Activated CD4-positive, alpha-beta T cell treated with anti-CD3 and anti-CD28 coated beads, Interleukin-2, amount 10 ng/mL, durations not matched to agents 7 days and 5 days (primary cell): ENCODE measurements at regions of chr5 and their contacts with region 1.

Region 1: DNA sequence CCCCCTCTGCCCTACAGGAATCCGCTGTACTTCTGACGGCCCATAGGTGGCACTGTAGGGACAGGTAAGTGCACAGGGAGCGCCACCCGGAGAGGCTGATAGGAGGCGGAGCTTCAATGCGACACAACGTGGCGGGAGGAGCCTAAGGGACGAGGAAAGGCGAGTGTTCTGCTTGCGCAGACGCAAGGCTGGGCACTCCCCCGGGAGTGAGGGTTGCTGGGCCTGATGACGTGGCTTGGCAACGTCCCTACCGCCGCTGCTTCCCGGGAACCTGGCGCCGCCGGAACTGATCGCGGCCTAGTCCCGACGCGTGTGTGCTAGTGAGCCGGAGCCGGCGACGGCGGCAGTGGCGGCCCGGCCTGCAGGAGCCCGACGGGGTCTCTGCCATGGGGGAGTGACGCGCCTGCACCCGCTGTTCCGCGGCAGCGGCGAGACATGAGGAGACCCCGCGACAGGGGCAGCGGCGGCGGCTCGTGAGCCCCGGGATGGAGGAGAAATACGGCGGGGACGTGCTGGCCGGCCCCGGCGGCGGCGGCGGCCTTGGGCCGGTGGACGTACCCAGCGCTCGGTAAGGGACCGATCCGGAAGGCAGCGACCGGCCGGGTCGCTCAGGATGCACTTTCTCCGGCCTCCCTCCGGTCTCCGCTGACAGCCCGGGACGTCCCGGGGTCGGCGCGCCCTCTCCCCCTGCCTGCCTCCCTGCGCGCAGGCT is at the start of gene SLC30A5:
- DNase-seq: peak; percentile 99
- H3K4me3 Mint-ChIP-seq: peak within 1 kb of the TSS; percentile 96
- H3K27ac Mint-ChIP-seq: peak within 1 kb of the TSS; percentile 97
- H3K4me1 Mint-ChIP-seq: peaks cover 35% of the 10 kb centered on the region
- H3K27me3 Mint-ChIP-seq: no peaks in the 10 kb centered on the region
- total RNA-seq, gene SLC30A5: 40.2 to 50.5 TPM

Region 2: DNA sequence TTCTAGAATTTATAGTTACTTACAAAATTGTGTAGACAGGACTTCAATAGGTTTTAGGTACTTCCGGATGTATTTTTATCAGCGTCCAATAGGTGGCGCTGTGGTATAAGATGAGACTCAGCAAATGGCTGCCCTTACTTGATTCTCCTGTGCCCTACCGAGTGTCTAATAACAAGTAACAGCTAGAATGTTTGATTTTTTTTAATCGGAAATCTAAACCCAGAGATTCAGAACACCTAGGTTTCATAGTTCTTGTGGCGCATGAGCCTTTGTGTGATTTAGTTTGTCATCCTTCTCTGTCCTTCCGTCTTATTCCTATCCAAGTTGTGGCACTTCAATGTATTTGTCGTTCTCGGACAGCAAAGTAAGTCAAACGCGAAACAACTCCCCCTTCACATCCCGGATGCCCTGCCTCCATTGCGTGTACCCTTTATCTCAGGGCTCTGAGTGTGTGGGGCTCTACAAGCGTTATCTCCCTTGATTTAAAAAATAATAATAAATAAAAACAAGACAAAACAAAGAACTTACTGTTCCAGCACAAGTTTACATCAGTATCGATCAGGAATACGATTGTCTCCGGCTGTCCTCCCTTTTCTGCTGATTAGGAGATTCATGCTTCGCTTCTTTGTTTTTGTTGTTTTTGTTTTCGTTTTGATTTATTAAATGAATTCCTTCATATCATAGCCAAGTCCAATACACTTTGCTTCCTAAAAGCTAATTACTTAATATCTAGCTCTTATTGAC is 50.8 kb before region 1 on chr5:
- CTCF ChIA-PET with region 1: interaction called, 10 read pairs
- POLR2A ChIA-PET with region 1: no interaction called
- DNase-seq: peak; percentile 91
- H3K4me3 Mint-ChIP-seq: peak overlapping the region; percentile 75
- H3K27ac Mint-ChIP-seq: peak overlapping the region; percentile 84
- H3K4me1 Mint-ChIP-seq: peaks cover 24% of the 10 kb centered on the region
- H3K27me3 Mint-ChIP-seq: no peaks in the 10 kb centered on the region

Region 3: DNA sequence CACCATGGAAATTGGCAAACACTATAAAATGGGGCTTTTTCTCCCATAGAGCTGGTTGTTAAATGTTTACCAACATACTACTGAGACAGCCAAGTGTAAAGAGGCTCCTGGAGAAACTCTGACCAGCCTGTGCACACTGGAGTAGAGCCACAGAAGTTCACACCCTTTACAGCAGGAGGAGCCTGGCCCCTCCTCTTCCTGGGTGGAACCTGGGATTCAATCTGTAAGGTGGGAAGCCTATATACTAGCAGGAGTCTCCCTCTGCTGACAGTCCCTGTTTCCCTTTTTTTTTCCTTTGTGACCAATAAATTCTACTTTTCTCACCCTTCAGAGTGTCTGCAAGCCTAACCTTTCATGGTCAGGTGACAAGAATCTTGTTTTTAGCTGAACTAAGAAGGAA is 10.5 kb before region 1 on chr5:
- CTCF ChIA-PET with region 1: interaction called, 24 read pairs
- POLR2A ChIA-PET with region 1: interaction called, 3 read pairs
- DNase-seq: no peak
- H3K4me3 Mint-ChIP-seq: no peak overlapping the region
- H3K27ac Mint-ChIP-seq: no peak overlapping the region
- H3K4me1 Mint-ChIP-seq: peaks cover 20% of the 10 kb centered on the region
- H3K27me3 Mint-ChIP-seq: no peaks in the 10 kb centered on the region

Region 4: GRCh38 chr5:69189162-69190086 is 95.5 kb after region 1 on chr5 and contains the start of gene CENPH:
- CTCF ChIA-PET with region 1: interaction called, 11 read pairs
- POLR2A ChIA-PET with region 1: no interaction called
- DNase-seq: peak; percentile 96
- H3K4me3 Mint-ChIP-seq: peak within 1 kb of the TSS; percentile 94
- H3K27ac Mint-ChIP-seq: peak within 1 kb of the TSS; percentile 96
- H3K4me1 Mint-ChIP-seq: peaks cover 18% of the 10 kb centered on the region
- H3K27me3 Mint-ChIP-seq: no peaks in the 10 kb centered on the region
- total RNA-seq, gene CENPH: 40.0 to 42.6 TPM

Region 5: GRCh38 chr5:69252437-69252836 is 158.5 kb after region 1 on chr5:
- CTCF ChIA-PET with region 1: interaction called, 10 read pairs
- POLR2A ChIA-PET with region 1: no interaction called
- DNase-seq: no peak
- H3K4me3 Mint-ChIP-seq: no peak overlapping the region
- H3K27ac Mint-ChIP-seq: no peak overlapping the region
- H3K4me1 Mint-ChIP-seq: no peaks in the 10 kb centered on the region
- H3K27me3 Mint-ChIP-seq: no peaks in the 10 kb centered on the region

Region 6: GRCh38 chr5:69334793-69335268 is 240.9 kb after region 1 on chr5:
- CTCF ChIA-PET with region 1: interaction called, 15 read pairs
- POLR2A ChIA-PET with region 1: no interaction called
- DNase-seq: peak; percentile 81
- H3K4me3 Mint-ChIP-seq: no peak overlapping the region
- H3K27ac Mint-ChIP-seq: peak overlapping the region; percentile 80
- H3K4me1 Mint-ChIP-seq: peaks cover 21% of the 10 kb centered on the region
- H3K27me3 Mint-ChIP-seq: no peaks in the 10 kb centered on the region